SK-N-SH (cell line): ENCODE measurements at regions of chr14 and their contacts with region 1.

Region 1: DNA sequence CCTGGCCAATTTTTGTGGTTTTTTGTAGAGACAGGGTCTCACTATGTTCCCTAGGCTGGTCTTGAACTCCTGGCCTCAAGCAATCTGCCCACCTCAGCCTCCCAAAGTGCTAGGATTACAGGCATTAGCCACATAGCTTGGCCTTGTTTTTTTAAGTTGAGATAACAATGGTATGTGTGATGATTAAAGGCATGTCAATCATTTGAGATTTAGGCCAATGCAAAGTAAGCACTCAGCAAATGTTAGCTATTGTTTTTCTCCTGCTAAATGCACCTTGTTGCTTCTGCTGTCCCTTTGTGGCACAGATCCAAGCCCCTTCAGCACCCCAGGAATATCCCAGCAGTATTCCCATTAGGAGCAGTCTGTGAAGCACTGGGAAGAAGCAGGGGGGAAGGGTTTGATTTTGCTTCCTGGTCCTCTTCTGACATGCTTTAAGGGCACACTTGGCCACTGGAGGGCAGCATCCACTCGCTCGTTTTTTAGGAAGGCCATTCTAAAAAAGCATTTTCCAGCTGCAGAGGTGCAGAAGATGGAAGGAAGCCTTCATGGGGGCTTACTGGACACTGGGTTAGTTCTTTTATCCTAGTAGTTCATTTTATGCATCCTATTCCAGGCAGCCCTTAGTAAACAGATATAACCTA is 70.2 kb upstream of the ZFP36L1 start:
- DNase-seq: peak; percentile 79
- H3K4me3 ChIP-seq: no peak overlapping the region; a peak in 1 of 4 replicates
- H3K27ac ChIP-seq: no peak overlapping the region
- H3K4me1 ChIP-seq: no peaks in the 10 kb centered on the region
- H3K27me3 ChIP-seq: no peaks in the 10 kb centered on the region
- CTCF ChIP-seq: peak; percentile 84
- EP300 ChIP-seq: no peak
- RAD21 ChIP-seq: peak; percentile 88

Region 2: GRCh38 chr14:68834816-68835215 is 28.3 kb before region 1 on chr14:
- CTCF ChIA-PET with region 1: no interaction called
- POLR2A ChIA-PET with region 1: no interaction called
- DNase-seq: no peak
- H3K4me3 ChIP-seq: no peak overlapping the region
- H3K27ac ChIP-seq: no peak overlapping the region
- H3K4me1 ChIP-seq: no peaks in the 10 kb centered on the region
- H3K27me3 ChIP-seq: no peaks in the 10 kb centered on the region
- CTCF ChIP-seq: no peak
- EP300 ChIP-seq: no peak
- RAD21 ChIP-seq: no peak

Region 3: GRCh38 chr14:68849413-68849812 is 13.7 kb before region 1 on chr14:
- CTCF ChIA-PET with region 1: interaction called, 16 read pairs
- POLR2A ChIA-PET with region 1: no interaction called
- DNase-seq: no peak
- H3K4me3 ChIP-seq: no peak overlapping the region
- H3K27ac ChIP-seq: no peak overlapping the region
- H3K4me1 ChIP-seq: peaks cover 0 to 4% of the 10 kb centered on the region in 2 experiments; a peak in 1 of 4 replicates
- H3K27me3 ChIP-seq: no peaks in the 10 kb centered on the region
- CTCF ChIP-seq: no peak
- EP300 ChIP-seq: no peak
- RAD21 ChIP-seq: no peak

Region 4: DNA sequence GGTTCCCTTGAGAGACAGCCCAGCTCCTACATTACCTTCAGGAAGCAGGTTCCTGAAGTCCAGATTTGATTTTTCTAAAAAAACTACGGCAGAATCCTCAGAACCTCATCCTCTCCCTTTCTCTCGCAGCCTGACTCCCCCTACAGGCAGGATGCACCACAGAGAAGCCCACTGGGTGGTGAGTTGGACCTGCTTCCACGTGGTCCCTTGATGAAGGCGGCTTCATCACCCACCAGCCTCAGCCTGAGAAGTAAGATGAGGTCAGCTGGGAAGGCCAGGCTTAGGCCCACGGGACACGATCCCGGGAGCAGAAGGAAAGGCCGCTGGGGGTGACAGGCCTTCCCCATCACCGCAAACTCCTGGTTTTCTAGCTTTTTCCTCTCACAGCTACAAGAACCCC is 33.1 kb after region 1 on chr14:
- CTCF ChIA-PET with region 1: interaction called, 18 read pairs
- POLR2A ChIA-PET with region 1: no interaction called
- DNase-seq: no peak
- H3K4me3 ChIP-seq: no peak overlapping the region
- H3K27ac ChIP-seq: no peak overlapping the region
- H3K4me1 ChIP-seq: no peaks in the 10 kb centered on the region
- H3K27me3 ChIP-seq: no peaks in the 10 kb centered on the region
- CTCF ChIP-seq: peak; percentile 34
- EP300 ChIP-seq: no peak
- RAD21 ChIP-seq: no peak

Region 5: DNA sequence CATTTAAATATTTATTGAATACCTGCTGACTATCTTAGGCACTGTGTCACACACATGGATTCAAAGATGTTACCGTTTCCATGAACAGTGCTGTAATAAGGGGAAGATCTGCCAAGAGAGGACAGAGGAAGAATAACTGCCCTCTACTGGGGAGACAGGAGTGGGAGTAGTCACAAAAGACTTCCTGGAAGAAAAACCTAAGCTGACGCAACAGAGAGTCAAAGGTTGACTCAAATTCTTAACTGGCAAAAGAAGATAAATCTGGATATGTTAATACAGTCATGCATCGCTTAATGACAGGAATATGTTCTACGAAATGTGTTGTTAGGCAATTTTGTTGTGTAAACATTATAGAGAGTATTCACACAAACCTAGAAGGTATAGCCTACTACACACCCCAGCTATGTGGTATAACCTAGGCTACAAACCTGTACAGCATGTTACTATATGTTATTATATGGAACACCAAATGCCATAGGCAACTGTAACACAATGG is 238.3 kb after region 1 on chr14:
- CTCF ChIA-PET with region 1: interaction called, 94 read pairs
- POLR2A ChIA-PET with region 1: no interaction called
- DNase-seq: peak; percentile 20
- H3K4me3 ChIP-seq: no peak overlapping the region; a peak in 1 of 4 replicates
- H3K27ac ChIP-seq: peak overlapping the region in 1 of 2 experiments; percentile 57; a peak in 2 of 4 replicates
- H3K4me1 ChIP-seq: peaks cover 0 to 4% of the 10 kb centered on the region in 2 experiments; a peak in 2 of 4 replicates
- H3K27me3 ChIP-seq: no peaks in the 10 kb centered on the region
- CTCF ChIP-seq: peak; percentile 75
- EP300 ChIP-seq: no peak
- RAD21 ChIP-seq: peak; percentile 53

Region 6: DNA sequence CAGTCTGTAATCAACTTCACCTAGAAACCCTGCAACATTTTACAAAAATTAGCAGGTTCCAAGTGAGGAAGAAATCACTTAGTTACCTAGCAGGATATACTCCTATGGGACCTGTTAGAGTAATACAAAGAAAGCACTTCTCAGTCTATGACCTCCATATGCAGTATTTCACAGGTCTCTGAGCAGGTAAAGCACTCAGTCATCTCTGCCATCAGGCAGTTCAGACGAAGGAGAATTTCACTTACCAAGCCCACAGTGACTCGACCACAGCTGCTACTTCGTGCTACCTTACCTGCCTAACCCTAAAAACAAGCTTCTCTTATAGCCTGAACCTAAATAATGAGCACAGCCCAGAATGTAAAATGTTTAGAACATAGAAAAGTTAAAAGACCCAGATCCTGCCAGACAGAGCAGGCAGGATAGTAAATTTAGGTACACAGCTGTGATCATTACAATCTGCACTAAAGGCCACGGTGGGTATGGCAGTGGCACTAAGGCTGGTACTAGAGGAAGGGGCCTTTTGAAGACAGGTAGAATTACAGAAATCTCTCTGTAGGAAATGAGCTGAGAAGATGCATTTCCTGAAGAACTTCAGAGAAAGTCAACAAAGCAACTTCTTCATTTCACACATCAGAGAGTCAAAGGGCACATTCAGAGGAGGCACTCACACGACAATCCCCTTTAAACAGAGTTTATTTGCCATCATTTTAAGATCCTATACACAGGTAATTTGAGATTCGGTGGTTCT is 254.1 kb after region 1 on chr14:
- CTCF ChIA-PET with region 1: interaction called, 11 read pairs
- POLR2A ChIA-PET with region 1: no interaction called
- DNase-seq: no peak
- H3K4me3 ChIP-seq: no peak overlapping the region
- H3K27ac ChIP-seq: no peak overlapping the region
- H3K4me1 ChIP-seq: no peaks in the 10 kb centered on the region
- H3K27me3 ChIP-seq: no peaks in the 10 kb centered on the region
- CTCF ChIP-seq: no peak
- EP300 ChIP-seq: no peak
- RAD21 ChIP-seq: no peak

Region 7: GRCh38 chr14:69657950-69658355 is 794.9 kb after region 1 on chr14:
- CTCF ChIA-PET with region 1: no interaction called
- POLR2A ChIA-PET with region 1: no interaction called
- DNase-seq: no peak
- H3K4me3 ChIP-seq: no peak overlapping the region
- H3K27ac ChIP-seq: no peak overlapping the region
- H3K4me1 ChIP-seq: peaks cover 3 to 8% of the 10 kb centered on the region in 2 experiments; a peak in 2 of 4 replicates
- H3K27me3 ChIP-seq: no peaks in the 10 kb centered on the region
- CTCF ChIP-seq: no peak
- EP300 ChIP-seq: no peak
- RAD21 ChIP-seq: no peak